ENCODE measurements at regions of chr6 and their contacts with region 1.

Region 1: DNA sequence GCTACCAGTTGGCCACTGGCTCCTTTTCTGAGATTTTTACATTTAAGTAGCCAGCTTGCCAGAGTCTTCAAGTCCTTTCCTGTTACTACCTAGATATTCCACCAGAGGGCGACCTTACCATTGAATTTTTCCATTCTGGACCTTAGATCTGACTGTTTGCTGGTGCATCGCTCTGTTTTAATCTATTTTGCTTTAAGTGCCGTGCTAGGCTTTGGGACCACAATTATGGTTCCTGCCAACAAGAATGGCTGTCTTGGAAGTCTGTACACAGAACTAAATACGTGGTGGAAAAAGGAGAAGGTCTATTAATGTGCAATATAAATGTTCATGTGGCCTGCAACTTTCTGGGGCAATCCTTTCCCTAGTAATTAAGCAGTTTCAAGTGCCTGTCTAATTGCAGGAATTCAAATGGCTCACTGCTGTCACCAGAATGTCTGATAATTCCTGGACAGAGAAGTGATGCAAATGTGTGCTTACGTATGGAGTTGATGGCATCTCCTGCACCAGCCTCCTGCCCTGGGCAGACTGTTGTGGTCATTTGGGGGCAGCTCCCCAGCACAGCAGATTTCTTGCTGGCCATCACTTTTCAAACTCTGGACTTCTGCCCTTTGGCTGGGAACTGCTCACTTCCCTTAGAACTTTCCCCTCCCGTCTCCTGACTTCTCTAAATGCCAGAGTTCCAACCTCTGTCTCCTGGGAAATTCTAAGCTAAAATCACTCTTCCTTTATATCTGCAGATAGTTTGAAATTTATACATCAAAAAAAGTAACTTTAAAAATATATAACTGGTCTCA is 5.6 kb upstream of the HLA-DOA start:
- DNase-seq: peak in 2 of 10 donors; percentile 21 to 26

Region 2: DNA sequence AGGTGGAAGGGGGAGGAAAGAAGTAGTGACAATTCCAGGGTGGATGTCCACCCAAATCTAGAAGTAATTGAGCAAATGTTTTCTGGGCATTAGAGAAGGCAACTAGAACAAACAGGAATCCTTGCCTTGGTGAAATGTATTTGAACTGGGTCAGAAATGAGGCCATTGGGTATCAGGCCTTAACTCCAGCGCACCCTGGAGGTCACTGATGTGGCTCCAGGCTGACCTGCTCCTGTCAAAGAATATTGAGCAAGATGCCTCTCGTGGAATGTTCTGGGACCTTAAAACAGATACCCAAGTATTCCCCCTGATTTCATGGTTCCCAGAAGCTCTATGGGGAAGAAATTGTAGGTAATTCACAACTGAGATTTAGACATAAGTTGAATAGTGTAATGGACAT is 67.7 kb after region 1 on chr6:
- intact Hi-C with region 1: loop called (anchors 10 kb)
- DNase-seq: no peak

Region 3: GRCh38 chr6:33147807-33148666 is 133.0 kb after region 1 on chr6:
- intact Hi-C with region 1: loop called (anchors 1 kb)
- DNase-seq: no peak

Measured in posterior cingulate gyrus (tissue), 11 donors.